Stomach (tissue), 19 donors: ENCODE measurements at regions of chr22 and their contacts with region 1.

Region 1: DNA sequence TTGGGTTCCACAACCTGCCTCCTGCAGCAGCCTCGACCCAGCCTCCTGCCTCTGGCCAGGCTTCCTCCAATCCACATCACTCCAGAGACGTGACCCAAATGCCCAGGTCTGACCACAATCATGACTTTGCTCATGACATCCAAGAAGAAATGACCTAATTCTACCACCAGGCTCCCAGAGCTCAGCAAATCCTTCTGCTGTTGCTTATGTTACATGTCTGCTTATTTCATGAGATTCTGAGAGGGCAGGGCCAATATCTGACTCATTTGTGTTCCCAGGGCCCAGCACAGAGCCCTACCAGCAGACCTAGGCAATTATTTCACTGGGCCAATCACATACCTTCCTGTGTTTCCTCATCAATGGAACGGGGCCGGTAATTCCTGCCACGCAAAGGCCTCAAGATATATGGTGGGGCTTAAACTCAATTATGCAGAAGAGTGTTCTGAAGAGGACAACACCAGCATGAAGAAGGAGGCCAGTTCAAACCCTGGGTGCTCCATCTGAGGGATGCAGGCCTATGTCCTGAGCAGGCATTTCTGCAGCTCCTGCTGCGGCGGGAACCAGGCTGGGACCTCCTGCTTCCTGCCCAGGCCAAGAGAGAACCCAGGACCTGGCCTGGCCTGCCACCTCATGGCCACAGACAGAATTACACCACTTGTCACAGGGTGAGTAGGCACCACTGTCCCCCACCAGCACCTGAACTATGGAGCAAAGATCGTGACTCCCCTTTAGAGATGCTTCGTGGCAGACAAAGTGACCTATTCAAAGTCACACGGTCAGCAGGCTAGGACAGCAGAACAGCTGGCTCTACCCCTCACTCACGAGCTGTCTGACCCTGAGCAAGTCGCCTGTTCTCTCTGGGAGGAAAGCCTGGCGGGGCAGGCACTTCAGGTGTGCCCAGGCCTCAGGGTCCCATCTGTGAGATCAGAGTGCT is 5.9 kb downstream of the CENPM start:
- DNase-seq: peak; percentile 91 to 95
- H3K4me3 ChIP-seq: no peak overlapping the region
- H3K27ac ChIP-seq: peak overlapping the region; percentile 79 to 91 (median 80)
- H3K4me1 ChIP-seq: peaks cover 20 to 48% (median 40%) of the 10 kb centered on the region in 4 donors
- H3K27me3 ChIP-seq: no peaks in the 10 kb centered on the region
- CTCF ChIP-seq: peak in 6 of 7 experiments; percentile 77 to 99 (median 95)
- EP300 ChIP-seq: no peak
- POLR2A ChIP-seq: no peak

Region 2: DNA sequence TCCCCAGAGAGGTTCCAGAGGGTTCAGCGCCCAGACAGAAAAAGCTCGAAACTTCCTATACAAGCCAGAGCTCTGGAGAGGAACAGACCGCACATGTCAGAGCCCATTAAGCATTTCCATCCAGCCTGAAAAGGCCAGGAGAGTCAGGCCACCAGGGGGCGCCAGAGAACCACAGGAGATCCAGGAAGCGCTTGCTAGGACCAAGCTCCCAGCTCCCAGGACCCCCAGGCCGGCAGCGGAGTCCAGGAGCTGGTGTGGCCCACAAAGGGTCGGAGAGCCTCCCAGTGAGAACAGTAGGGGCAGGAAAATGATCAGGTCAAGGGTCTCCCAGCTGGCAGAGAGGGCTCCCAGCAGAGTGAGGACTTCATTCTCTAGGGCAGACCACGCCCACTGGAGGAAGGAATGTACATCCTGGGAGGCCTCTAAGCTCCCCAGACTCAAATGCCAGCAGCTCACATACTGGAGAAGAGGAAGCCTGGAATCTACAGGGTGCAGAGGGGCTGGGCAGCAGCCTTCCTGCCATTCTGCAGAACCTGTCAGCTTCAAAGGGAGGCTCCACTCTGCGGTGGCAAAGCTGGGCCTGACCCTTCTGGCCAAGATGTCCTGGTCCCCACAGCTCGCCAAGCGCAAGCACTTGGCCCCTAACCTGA is 243.8 kb before region 1 on chr22:
- intact Hi-C with region 1: loop called (anchors 5 kb)
- DNase-seq: peak; percentile 95 to 96
- H3K4me3 ChIP-seq: peak overlapping the region; percentile 15 to 30 (median 27)
- H3K27ac ChIP-seq: peak overlapping the region in 4 of 5 donors; percentile 18 to 66 (median 54)
- H3K4me1 ChIP-seq: peaks cover 17 to 24% (median 21%) of the 10 kb centered on the region in 4 donors
- H3K27me3 ChIP-seq: no peaks in the 10 kb centered on the region
- CTCF ChIP-seq: peak in 5 of 7 experiments; percentile 92 to 99 (median 97)
- EP300 ChIP-seq: no peak
- POLR2A ChIP-seq: no peak

Region 3: DNA sequence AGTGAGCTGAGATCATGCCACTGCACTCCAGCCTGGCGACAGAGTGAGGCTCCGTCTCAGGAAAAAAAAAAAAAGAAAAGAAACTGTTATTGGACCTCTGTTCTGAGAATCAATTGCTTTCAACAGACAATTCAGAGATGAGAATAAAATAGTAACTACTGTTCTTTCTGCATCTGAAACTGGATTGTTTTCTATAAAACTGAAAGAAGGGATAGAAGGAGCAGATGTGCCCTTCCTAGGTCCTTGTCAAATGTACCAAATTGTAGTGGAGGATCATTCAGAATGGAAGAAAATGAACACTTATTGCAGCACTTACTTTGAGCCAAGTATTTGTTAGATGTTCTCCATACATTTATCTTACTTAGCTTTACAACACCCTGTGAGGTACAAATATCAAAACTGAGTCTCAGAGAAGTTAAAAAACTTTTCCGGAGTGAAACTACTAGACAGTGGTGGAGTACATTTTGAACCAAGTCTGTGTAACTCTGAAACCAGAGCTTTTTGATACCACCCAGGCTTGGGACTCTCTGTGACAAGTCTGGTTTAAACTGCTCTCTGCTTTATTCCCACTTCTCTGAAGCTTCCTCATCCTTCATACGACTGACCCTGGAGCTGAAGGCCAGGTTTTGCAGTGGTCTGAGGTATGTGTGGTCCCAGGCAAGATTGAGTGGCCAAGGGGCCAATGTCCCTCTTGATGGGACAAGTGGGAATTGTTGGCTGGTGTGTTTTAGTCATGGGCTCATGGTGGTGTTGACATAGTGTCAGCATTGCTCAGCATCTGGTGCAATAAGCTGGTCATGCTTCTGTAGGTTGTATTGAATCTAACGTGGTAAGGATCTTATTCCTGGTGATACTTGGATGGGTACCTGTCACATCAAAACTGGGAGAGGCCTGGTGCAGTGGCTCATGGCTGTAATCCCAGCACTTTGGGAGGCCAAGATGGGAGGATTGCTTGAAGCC is 188.8 kb before region 1 on chr22:
- intact Hi-C with region 1: loop called (anchors 10 kb)
- DNase-seq: no peak
- H3K4me3 ChIP-seq: no peak overlapping the region
- H3K27ac ChIP-seq: peak overlapping the region in 1 of 5 donors; percentile 38
- H3K4me1 ChIP-seq: no peaks in the 10 kb centered on the region
- H3K27me3 ChIP-seq: peaks cover 0 to 18% (median 0%) of the 10 kb centered on the region in 3 donors
- CTCF ChIP-seq: no peak
- EP300 ChIP-seq: no peak
- POLR2A ChIP-seq: no peak

Region 4: GRCh38 chr22:41822317-41823060 is 118.6 kb before region 1 on chr22:
- intact Hi-C with region 1: loop called (anchors 5 kb)
- DNase-seq: peak in 1 of 2 donors; percentile 83
- H3K4me3 ChIP-seq: no peak overlapping the region
- H3K27ac ChIP-seq: no peak overlapping the region
- H3K4me1 ChIP-seq: peaks cover 22 to 39% (median 25%) of the 10 kb centered on the region in 4 donors
- H3K27me3 ChIP-seq: no peaks in the 10 kb centered on the region
- CTCF ChIP-seq: peak in 5 of 7 experiments; percentile 26 to 78 (median 53)
- EP300 ChIP-seq: no peak
- POLR2A ChIP-seq: no peak